Activated T-helper 1 cell treated with anti-CD3 and anti-CD28 coated beads, Interleukin-12 subunit alpha, Interleukin-12 subunit beta, Interleukin-2, Interleukin-4 antibody, amounts not matched to agents 30 ng/mL and 10 ng/mL and 1 ng/mL, durations not matched to agents 14 hours and 24 hours and 36 hours (primary cell): ENCODE measurements at regions of chr5 and their contacts with region 1.

Region 1: DNA sequence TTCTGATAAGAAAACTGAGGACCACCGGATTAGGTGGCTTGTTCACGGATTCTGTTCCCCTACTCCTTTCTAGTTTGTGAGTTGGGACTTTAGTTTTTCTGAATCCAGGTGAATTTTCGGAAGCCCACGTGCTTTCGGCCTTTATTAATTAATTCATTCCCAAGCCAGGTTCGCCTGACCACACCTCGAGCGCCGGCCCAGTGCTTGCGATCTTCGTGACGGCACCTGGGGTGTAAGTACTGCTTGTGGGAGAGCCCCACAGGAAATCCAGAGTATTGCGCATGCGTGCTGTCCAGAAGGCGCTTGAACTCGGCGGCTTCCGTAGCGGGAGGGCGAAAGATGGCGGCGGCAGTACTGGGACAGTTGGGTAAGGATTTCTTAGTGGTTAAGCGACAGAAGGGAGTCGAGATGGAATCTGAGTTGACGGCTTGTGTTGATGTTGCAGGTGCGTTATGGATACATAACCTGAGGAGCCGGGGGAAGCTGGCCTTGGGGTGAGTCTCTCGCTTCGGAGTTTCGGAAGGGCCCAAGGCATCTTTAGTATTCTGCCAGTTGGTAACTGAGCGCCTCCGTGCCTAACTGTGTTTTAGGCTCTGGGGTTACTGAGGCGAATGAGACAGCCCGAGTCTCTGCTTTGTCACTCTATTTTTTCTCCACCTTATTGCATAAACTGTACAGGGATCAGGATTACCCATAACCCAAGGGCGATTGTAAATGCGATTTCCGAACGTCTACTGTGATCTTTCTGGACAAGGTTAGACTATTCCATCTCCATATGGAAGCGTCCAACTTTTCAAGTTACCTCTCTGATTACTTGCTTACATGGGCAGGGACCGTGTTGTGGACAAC is at the start of gene MRPL22:
- DNase-seq: peak; percentile 93
- H3K4me3 Mint-ChIP-seq: peak within 1 kb of the TSS; percentile 94
- H3K27ac Mint-ChIP-seq: peak within 1 kb of the TSS; percentile 93
- H3K4me1 Mint-ChIP-seq: peaks cover 18% of the 10 kb centered on the region
- H3K27me3 Mint-ChIP-seq: peaks cover 3% of the 10 kb centered on the region
- total RNA-seq, gene MRPL22: 73.1 and 78.1 TPM in 2 replicates

Region 2: DNA sequence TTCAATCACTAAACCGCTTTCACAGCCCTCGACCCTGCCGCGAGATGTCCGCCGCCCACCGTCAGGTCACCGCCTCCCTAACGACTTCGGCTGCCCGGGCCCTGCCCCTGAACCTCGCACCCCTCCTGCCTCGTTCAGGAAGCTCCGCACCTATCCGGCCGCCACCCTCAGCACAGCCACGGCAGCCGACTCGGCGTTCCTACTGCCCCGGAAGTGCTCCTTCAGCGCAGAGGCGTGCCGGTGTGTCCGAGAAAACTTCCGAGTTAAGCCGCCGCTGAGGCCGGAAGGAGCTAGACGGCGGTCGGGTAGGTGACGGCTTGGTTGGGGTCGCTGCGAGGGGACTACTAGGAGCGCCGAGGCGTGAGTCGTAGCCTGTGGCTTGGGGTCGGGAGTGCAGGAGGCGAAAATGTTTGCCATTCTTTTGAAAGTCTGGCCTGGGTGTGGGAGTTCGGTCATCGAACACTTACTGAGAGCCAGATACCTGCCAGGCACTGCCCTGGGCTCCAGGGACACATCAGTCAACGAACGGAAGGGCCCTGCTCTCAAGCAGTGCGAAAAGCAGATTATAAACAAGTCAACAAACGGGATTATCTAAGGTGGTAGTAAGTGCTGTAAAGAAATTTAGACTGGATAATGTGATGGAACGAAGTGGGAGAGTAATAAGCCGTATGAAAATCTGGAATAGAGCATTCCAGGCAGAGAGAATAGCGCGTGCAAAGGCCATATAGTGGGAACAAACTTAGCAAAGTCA is 902.1 kb before region 1 on chr5 and contains the starts of genes FAM114A2 and MFAP3:
- intact Hi-C with region 1: loop called (anchors 5 kb)
- DNase-seq: peak; percentile 88
- H3K4me3 Mint-ChIP-seq: peak within 1 kb of the TSS; percentile 98
- H3K27ac Mint-ChIP-seq: peak within 1 kb of the TSS; percentile 94
- H3K4me1 Mint-ChIP-seq: peaks cover 50% of the 10 kb centered on the region
- H3K27me3 Mint-ChIP-seq: no peaks in the 10 kb centered on the region
- total RNA-seq, gene FAM114A2: 28.3 and 28.7 TPM in 2 replicates
- total RNA-seq, gene MFAP3: 24.3 and 29.9 TPM in 2 replicates

Region 3: GRCh38 chr5:154445422-154446182 is 495.4 kb before region 1 on chr5 and contains the start of gene SAP30L:
- intact Hi-C with region 1: loop called (anchors 2 kb)
- DNase-seq: peak; percentile 96
- H3K4me3 Mint-ChIP-seq: peak within 1 kb of the TSS; percentile 99
- H3K27ac Mint-ChIP-seq: peak within 1 kb of the TSS; percentile 95
- H3K4me1 Mint-ChIP-seq: peaks cover 65% of the 10 kb centered on the region
- H3K27me3 Mint-ChIP-seq: no peaks in the 10 kb centered on the region
- total RNA-seq, gene SAP30L: 37.5 and 44.4 TPM in 2 replicates

Region 4: GRCh38 chr5:154647114-154647760 is 293.8 kb before region 1 on chr5:
- intact Hi-C with region 1: loop called (anchors 1 kb)
- DNase-seq: no peak
- H3K4me3 Mint-ChIP-seq: peak overlapping the region; percentile 72
- H3K27ac Mint-ChIP-seq: no peak overlapping the region
- H3K4me1 Mint-ChIP-seq: peaks cover 16% of the 10 kb centered on the region
- H3K27me3 Mint-ChIP-seq: peaks cover 23% of the 10 kb centered on the region

Region 5: DNA sequence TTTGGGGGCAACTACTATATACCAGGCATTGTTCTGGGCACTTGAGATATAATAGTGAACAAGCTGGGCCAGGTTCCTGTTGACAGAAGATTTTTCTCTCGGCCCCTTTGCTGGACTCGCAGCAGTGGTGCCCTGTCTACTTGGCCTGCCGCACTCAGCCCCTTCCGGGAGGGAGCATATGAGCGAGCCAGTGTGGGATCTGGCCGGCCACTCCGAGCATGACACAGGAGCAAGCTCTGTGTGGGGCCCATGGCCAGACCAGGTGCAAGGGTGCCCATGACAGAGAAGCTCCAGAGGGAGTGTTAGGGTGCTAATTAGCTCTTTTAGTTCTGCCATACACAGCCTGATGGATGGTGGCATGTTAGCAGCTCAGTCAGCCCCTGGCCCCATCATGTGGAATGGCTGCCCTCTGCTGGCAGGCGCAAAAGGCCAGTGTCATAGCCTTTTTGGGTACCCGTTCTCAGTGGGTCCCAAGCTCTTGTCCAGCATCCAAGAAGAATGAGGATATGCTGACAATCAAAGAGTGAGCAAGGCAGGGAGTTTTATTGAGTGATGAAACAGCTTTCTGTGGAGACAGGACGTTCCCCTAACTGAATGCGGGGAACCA is 63.2 kb after region 1 on chr5:
- intact Hi-C with region 1: loop called (anchors 1 kb)
- DNase-seq: no peak
- H3K4me3 Mint-ChIP-seq: no peak overlapping the region
- H3K27ac Mint-ChIP-seq: no peak overlapping the region
- H3K4me1 Mint-ChIP-seq: no peaks in the 10 kb centered on the region
- H3K27me3 Mint-ChIP-seq: peaks cover 3% of the 10 kb centered on the region